Activated CD4-positive, alpha-beta memory T cell treated with anti-CD3 and anti-CD28 coated beads for 36 hours (primary cell): ENCODE measurements at regions of chr18 and their contacts with region 1.

Region 1: GRCh38 chr18:63311118-63312018 is 8.2 kb downstream of the BCL2 start:
- DNase-seq: no peak
- H3K4me3 Mint-ChIP-seq: no peak overlapping the region
- H3K27ac Mint-ChIP-seq: peak overlapping the region; percentile 14
- H3K4me1 Mint-ChIP-seq: peaks cover 85% of the 10 kb centered on the region
- H3K27me3 Mint-ChIP-seq: no peaks in the 10 kb centered on the region

Region 2: GRCh38 chr18:63131106-63131958 is 180.0 kb before region 1 on chr18:
- CTCF ChIA-PET with region 1: interaction called, 12 read pairs
- POLR2A ChIA-PET with region 1: no interaction called
- intact Hi-C with region 1: no loop called
- DNase-seq: peak; percentile 64
- H3K4me3 Mint-ChIP-seq: no peak overlapping the region
- H3K27ac Mint-ChIP-seq: peak overlapping the region; percentile 65
- H3K4me1 Mint-ChIP-seq: peaks cover 30% of the 10 kb centered on the region
- H3K27me3 Mint-ChIP-seq: no peaks in the 10 kb centered on the region